ENCODE measurements at regions of chr3 and their contacts with region 1.

Region 1: DNA sequence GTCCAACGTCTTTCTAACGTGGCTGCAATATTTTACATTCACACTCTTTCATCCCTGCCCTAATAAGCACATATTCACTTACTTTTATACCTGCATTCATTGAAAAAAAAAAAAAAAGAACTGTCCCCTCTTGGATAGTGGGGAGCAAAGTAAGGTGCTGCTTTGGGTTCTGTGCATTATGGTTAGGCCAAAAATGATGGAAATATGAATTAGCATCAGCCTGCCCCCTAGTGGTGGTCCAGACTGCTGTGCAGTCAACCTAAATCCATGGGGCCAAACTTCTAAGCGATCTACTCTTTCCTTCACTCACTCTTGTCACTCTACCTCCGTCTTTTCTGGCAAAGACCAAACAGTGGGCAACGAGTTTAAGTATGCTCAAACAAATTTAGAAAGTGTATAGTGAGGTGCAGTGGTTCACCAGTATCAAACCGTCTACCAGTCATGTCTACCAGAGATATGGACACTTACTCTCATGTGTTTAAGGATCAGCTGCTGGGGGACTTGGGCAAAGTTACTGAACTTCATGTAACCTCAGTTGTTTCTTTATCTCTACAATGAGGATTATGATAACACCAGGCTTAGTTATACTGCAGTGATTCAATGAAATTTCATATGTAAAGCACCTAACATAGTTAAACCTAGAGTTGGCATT is 61.5 kb upstream of the GRM7 start:
- DNase-seq: no peak
- ATAC-seq: peak; percentile 96
- H3K4me3 ChIP-seq: no peak overlapping the region
- H3K27ac ChIP-seq: no peak overlapping the region
- H3K4me1 ChIP-seq: no peaks in the 10 kb centered on the region
- H3K27me3 ChIP-seq: no peaks in the 10 kb centered on the region
- CTCF ChIP-seq: peak; percentile 76 to 81 (median 78)
- EP300 ChIP-seq: no peak
- POLR2A ChIP-seq: no peak
- RAD21 ChIP-seq: peak; percentile 82

Region 2: DNA sequence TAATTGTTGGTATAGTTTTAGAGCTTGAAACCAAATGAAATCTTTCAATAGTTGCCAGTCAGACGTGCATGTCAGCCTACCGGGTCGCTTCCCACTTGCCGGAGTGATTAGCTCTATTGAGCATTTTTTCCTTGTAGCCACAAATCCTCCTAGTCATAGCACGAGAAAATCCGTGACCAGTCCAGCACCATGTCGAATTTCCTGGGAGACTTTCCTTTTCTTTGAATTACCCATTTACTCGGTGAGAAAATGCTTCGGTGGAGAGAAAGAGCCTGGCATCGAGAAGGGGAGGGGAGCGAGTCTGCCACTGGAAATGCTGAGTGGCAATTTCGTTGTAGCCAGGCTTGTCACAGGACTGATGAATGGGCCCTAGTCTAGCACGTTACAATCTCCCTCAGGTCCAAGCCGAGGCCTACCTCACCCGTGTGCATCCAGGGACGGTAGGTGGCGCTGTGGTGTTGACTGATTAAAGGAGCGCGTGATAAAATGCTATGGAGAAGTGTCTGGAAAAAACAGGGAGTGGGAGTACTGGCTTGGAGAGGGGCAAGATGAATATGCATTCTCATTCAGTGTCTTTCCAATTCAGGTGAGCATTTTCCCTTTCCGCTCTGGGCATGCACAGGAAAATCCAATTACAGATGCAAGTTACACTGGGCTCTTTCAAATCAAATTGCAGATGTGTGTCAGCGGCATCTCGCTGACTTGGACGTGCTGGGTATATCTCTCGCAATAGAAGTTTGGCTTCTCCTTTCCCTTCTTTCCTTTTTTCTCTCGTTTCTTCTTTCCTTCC is 1373.1 kb before region 1 on chr3:
- CTCF ChIA-PET with region 1: no interaction called
- POLR2A ChIA-PET with region 1: no interaction called
- RAD21 ChIA-PET with region 1: no interaction called
- SMC1A ChIA-PET with region 1: interaction called, 4 read pairs
- in situ Hi-C with region 1: loop called (anchors 10 kb)
- intact Hi-C with region 1: loop called (anchors 5 kb)
- DNase-seq: no peak
- ATAC-seq: peak; percentile 83
- H3K4me3 ChIP-seq: no peak overlapping the region
- H3K27ac ChIP-seq: no peak overlapping the region
- H3K4me1 ChIP-seq: peaks cover 17% of the 10 kb centered on the region
- H3K27me3 ChIP-seq: no peaks in the 10 kb centered on the region
- CTCF ChIP-seq: peak; percentile 83 to 98 (median 89)
- EP300 ChIP-seq: no peak
- POLR2A ChIP-seq: no peak
- RAD21 ChIP-seq: peak; percentile 90

Region 3: GRCh38 chr3:6204891-6205290 is 594.5 kb before region 1 on chr3:
- CTCF ChIA-PET with region 1: interaction called, 19 read pairs
- POLR2A ChIA-PET with region 1: no interaction called
- RAD21 ChIA-PET with region 1: interaction called, 7 read pairs
- SMC1A ChIA-PET with region 1: interaction called, 10 read pairs
- in situ Hi-C with region 1: no loop called
- intact Hi-C with region 1: loop called (anchors 1 kb)
- DNase-seq: no peak
- ATAC-seq: peak; percentile 46; the same call in 1 of the 3 replicates
- H3K4me3 ChIP-seq: no peak overlapping the region
- H3K27ac ChIP-seq: no peak overlapping the region
- H3K4me1 ChIP-seq: no peaks in the 10 kb centered on the region
- H3K27me3 ChIP-seq: no peaks in the 10 kb centered on the region
- CTCF ChIP-seq: peak; percentile 18 to 32 (median 25); a peak in 3 of 6 replicates
- EP300 ChIP-seq: no peak
- POLR2A ChIP-seq: no peak
- RAD21 ChIP-seq: peak; percentile 61

Region 4: DNA sequence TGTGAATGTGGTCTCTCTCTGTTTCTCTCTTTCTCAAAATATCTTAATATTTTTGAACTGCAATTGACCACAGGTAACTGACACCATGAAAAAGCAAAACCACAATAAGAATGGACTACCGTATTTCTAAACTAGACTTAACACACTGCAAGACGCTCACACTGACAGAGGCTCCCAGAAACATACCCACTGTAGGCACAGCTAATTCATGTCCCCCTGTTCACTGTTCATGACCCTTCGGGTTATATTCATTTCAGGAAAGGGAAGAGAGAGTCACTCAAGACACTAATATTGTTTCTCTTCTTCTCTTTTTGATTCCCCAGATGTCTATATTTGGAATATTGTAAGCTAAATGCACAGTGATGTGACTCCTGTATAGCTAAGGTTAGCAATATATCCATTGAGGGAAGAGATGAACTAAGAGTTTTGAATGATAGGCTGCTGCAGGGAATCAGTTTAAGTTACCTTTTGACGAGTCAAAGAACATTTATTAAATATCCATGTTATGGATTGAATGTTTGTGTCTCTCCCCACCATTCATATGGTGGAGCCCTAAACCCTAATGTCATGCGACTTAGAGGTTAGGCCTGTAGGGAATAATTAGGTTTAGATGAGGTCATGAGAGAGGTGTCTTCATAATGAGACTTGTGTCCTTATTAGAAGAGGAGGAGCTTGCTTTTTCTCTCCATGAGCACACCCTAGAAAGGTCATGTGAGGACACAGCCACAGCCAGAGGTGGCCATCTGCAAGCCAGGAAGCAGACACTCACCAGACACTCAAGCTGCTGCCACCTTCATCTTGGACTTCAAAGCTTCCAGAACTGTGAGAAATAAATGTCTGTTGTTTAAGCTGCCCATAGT is 155.1 kb before region 1 on chr3:
- CTCF ChIA-PET with region 1: interaction called, 7 read pairs
- POLR2A ChIA-PET with region 1: no interaction called
- RAD21 ChIA-PET with region 1: interaction called, 4 read pairs
- SMC1A ChIA-PET with region 1: interaction called, 4 read pairs
- in situ Hi-C with region 1: no loop called
- intact Hi-C with region 1: loop called (anchors 2 kb)
- DNase-seq: peak; percentile 25
- ATAC-seq: peak; percentile 87
- H3K4me3 ChIP-seq: no peak overlapping the region
- H3K27ac ChIP-seq: no peak overlapping the region
- H3K4me1 ChIP-seq: no peaks in the 10 kb centered on the region
- H3K27me3 ChIP-seq: no peaks in the 10 kb centered on the region
- CTCF ChIP-seq: no peak
- EP300 ChIP-seq: no peak
- POLR2A ChIP-seq: no peak
- RAD21 ChIP-seq: 0 out of 2 replicates have a peak, but pooled peaks have one; percentile 3

Region 5: DNA sequence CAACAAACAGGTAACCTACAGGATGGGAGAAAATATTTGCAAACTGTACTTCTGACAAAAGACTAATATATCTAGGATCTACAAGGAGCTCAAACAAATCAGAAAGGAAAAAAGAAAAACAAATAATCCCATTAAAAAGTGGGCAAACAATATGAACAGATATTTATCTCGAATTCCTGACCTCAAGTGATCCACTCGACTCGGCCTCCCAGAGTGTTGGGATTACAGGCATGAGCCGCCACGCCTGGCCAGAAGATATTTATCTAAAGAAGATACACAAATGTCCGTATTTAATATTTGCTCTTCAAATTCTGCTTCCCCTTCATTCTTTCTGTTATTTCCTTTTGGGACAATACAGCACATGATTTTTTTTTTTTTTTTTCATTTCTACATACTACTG is 90.2 kb before region 1 on chr3:
- CTCF ChIA-PET with region 1: no interaction called
- POLR2A ChIA-PET with region 1: no interaction called
- RAD21 ChIA-PET with region 1: no interaction called
- SMC1A ChIA-PET with region 1: no interaction called
- in situ Hi-C with region 1: no loop called
- intact Hi-C with region 1: no loop called
- DNase-seq: no peak
- ATAC-seq: no peak
- H3K4me3 ChIP-seq: no peak overlapping the region
- H3K27ac ChIP-seq: no peak overlapping the region
- H3K4me1 ChIP-seq: no peaks in the 10 kb centered on the region
- H3K27me3 ChIP-seq: no peaks in the 10 kb centered on the region
- CTCF ChIP-seq: no peak
- EP300 ChIP-seq: no peak
- POLR2A ChIP-seq: no peak
- RAD21 ChIP-seq: no peak

Region 6: GRCh38 chr3:7171468-7171867 is 372.1 kb after region 1 on chr3:
- CTCF ChIA-PET with region 1: no interaction called
- POLR2A ChIA-PET with region 1: no interaction called
- RAD21 ChIA-PET with region 1: no interaction called
- SMC1A ChIA-PET with region 1: no interaction called
- in situ Hi-C with region 1: no loop called
- intact Hi-C with region 1: no loop called
- DNase-seq: no peak
- ATAC-seq: no peak
- H3K4me3 ChIP-seq: no peak overlapping the region
- H3K27ac ChIP-seq: no peak overlapping the region
- H3K4me1 ChIP-seq: no peaks in the 10 kb centered on the region
- H3K27me3 ChIP-seq: no peaks in the 10 kb centered on the region
- CTCF ChIP-seq: no peak
- EP300 ChIP-seq: no peak
- POLR2A ChIP-seq: no peak
- RAD21 ChIP-seq: no peak